ENCODE measurements at regions of chr5 and their contacts with region 1.

Region 1: DNA sequence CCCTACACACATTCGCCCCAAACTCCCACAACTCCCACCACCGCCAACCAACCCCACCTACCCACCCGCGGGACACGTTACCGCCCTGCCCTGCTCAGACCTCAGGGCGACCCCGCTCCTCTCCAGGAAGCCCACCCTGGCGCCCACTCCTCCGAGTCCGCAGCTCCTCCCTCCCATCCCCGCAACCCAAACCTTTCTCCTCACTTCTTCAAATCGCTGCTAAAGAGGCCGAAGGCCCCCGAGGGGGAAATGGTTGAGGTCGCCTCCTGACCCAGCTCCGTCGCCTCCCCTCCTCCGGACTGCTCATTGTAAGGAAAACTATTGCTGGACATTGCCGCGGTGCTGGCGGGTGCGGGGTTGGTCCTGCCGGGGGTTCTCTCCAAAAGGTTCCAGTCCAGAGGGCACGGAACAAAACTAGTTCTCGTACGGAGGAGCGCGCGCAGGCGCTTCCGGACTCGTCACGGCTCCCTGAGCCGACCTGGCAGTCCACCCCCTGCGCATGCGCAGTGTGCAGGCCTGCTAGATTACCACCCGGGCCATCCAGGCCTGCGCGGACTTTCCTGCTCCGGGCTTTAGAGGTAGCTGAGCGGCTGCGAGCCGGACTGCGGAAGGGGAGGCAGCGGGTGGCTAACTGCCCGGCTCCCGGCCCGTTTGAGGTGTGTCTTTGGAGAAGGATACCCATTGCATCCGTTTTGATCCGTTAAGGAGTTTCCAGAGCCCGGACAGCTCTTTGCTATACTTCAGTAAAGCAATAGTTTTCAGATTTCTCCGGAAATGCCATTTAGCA is at the start of gene AP3B1:
- DNase-seq: peak; percentile 98
- ATAC-seq: peak; percentile 93
- H3K4me3 Mint-ChIP-seq: peak within 1 kb of the TSS; percentile 90
- H3K27ac Mint-ChIP-seq: peak within 1 kb of the TSS; percentile 98
- H3K4me1 Mint-ChIP-seq: peaks cover 31% of the 10 kb centered on the region
- H3K27me3 Mint-ChIP-seq: peaks cover 3% of the 10 kb centered on the region
- total RNA-seq, gene AP3B1: 42.9 to 44.3 TPM

Region 2: DNA sequence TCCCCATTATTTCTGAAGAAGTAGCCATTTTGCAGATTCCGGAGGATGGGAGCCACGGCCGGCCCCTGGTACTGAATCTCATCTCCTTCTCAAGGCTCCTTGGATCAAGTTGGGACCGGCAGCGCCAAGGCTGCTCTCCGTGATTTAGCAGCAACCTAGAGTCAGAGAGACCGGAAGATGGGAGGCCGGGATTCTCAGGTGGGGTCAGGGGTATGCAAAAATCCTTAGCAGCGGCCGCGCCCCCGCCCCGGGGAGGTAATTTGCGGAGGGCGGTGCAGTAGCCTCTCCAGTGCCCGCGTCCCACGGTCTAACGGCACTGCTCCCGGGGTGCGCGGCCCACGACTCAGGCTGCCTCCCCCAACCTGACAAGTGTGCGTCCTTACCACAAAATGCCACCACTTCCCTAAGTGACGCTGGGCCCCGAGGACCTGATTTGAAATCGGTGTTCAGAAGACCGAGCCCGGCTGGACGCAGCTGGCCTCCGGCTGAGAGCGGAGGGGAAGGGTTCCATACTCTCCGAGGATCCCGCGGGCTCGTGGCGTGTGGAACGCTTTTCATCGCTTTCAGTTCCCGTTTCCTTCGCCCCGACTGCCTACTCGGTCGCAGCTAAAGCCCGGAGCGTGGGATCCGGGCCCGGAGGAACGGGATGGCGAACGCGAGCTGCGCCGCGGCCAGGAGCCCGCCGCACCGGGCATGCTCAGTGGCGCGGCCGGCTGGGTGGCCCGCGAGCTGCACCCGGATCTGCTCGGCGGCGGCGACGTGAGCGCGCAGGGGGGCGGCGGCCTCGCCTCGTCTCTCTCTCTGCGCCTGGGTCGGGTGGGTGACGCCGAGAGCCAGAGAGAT is 65.6 kb after region 1 on chr5 and contains the start of gene SCAMP1:
- CTCF ChIA-PET with region 1: interaction called, 37 read pairs
- POLR2A ChIA-PET with region 1: interaction called, 93 read pairs
- DNase-seq: peak; percentile 91
- ATAC-seq: peak; percentile 94
- H3K4me3 Mint-ChIP-seq: peak within 1 kb of the TSS; percentile 97
- H3K27ac Mint-ChIP-seq: peak within 1 kb of the TSS; percentile 98
- H3K4me1 Mint-ChIP-seq: peaks cover 28% of the 10 kb centered on the region
- H3K27me3 Mint-ChIP-seq: no peaks in the 10 kb centered on the region
- total RNA-seq, gene SCAMP1: 13.5 to 13.9 TPM